CD14-positive monocyte (primary cell): ENCODE measurements at regions of chr18 and their contacts with region 1.

Region 1: DNA sequence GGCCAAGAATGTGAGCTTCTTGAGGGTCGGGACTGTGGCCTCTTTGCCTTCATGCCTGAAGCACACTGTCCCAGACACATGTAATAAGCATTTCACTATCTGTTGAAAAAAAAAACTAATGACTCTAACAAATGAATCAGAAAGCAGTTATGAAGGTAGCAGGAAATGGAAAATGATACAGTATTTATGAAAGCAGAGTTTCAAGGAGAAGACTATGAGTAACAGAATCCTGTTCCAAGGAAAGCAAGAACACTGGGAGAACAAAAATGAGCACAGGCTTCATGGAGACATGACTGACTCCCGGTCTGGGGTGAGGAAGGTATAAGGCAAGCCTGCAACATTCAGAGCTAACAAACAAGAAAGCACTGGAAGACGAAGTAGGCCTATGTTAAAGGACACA is 190.8 kb downstream of the RNF152 start:
- DNase-seq: no peak
- H3K4me3 ChIP-seq: no peak overlapping the region
- H3K4me3 Mint-ChIP-seq: no peak overlapping the region
- H3K27ac ChIP-seq: no peak overlapping the region
- H3K27ac Mint-ChIP-seq: no peak overlapping the region
- H3K4me1 ChIP-seq: no peaks in the 10 kb centered on the region
- H3K4me1 Mint-ChIP-seq: no peaks in the 10 kb centered on the region
- H3K27me3 ChIP-seq: peaks cover 0 to 3% of the 10 kb centered on the region in 2 donors
- H3K27me3 Mint-ChIP-seq: peaks cover 1 to 18% (median 4%) of the 10 kb centered on the region in 3 donors
- CTCF ChIP-seq: no peak

Region 2: DNA sequence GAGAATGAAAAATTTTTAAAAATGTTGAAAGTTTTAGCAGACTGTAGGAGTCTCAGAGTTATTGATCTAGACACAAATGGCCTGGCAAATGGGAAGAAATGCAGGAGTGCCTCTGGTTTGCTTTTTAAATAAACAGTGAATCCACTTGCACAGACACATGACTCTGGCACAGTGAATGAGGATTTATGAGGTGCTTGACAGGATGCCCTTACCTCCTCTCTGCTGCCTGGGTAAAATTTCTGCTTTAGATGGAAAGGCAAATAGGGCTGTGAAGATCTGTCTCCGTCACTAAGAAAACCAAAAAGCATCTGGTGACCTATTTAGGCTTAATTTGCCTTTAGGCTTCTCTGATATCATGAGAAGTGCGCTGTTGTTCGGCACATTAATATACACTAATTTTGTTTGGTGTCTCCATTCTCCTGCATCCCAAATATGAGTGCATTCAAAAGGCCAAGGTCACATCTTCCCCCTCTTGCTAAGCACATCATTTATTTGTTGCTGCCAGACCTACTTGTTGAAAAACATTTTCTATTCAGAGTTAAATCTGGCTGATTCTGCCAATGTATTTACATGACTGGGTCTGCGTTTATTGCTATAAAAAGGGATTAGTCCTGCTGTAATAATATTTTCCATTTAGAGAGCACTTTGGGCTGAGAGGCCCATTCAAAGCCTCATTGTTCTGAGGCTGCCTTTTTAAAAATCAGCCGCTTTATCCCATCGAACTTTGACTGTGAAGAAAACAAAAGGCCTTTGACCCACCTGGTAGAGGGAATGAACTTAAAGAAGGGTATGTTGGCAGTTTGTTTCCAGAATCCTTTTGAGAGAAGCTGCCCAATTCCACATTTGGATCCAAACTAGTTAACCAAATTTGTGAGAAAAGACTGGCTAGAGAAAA is 95.9 kb after region 1 on chr18:
- intact Hi-C with region 1: loop called in 1 of 2 experiments (anchors 10 kb)
- DNase-seq: no peak
- H3K4me3 ChIP-seq: no peak overlapping the region
- H3K4me3 Mint-ChIP-seq: no peak overlapping the region
- H3K27ac ChIP-seq: no peak overlapping the region
- H3K27ac Mint-ChIP-seq: no peak overlapping the region
- H3K4me1 ChIP-seq: no peaks in the 10 kb centered on the region
- H3K4me1 Mint-ChIP-seq: peaks cover 7% of the 10 kb centered on the region
- H3K27me3 ChIP-seq: peaks cover 0 to 3% of the 10 kb centered on the region in 2 donors
- H3K27me3 Mint-ChIP-seq: peaks cover 2 to 5% (median 3%) of the 10 kb centered on the region in 3 donors
- CTCF ChIP-seq: no peak

Region 3: GRCh38 chr18:61882296-61883004 is 180.4 kb after region 1 on chr18:
- intact Hi-C with region 1: no loop called
- DNase-seq: no peak
- H3K4me3 ChIP-seq: no peak overlapping the region
- H3K4me3 Mint-ChIP-seq: no peak overlapping the region
- H3K27ac ChIP-seq: no peak overlapping the region
- H3K27ac Mint-ChIP-seq: no peak overlapping the region
- H3K4me1 ChIP-seq: no peaks in the 10 kb centered on the region
- H3K4me1 Mint-ChIP-seq: no peaks in the 10 kb centered on the region
- H3K27me3 ChIP-seq: peaks cover 0 to 2% of the 10 kb centered on the region in 2 donors
- H3K27me3 Mint-ChIP-seq: peaks cover 12 to 23% (median 13%) of the 10 kb centered on the region in 3 donors
- CTCF ChIP-seq: no peak